Activated CD8-positive, alpha-beta T cell treated with anti-CD3 and anti-CD28 coated beads for 36 hours (primary cell): ENCODE measurements at regions of chr7 and their contacts with region 1.

Region 1: DNA sequence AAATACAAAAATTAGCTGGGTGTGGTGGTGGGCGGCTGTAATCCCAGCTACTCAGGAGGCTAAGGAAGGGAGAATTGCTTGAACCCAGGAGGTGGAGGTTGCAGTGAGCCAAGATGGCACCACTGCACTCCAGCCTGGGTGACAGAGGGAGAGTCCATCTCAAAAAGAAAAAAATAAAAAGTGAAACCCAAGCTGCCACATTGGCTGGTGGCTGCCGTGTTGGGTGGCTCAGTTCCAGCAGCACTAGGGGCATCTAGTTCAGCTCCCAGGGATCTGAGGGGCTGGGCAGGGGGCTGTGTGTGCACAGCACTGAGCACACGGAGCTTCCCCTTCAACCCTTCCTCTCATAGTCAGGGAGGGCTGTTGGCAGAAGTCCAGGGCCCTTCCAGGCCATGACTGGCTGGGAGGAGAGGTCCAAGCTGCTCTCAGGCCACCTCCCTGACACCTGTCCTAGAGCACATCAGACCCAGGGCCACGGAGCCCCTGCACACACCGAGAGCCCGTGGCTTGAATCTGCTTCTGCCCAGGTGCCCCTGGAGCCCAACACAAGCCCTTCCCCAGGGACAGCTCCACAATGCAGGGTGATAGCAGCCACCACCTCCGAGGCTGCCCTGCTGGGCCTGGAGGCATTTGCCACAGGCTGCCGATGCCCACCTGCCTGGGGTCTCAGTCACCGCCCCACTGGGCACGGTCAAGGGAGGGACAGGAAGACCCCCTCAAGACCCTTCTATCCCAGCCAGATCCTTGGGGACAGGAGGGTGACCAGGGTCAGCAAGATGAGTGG is 47.3 kb downstream of the YKT6 start:
- DNase-seq: no peak
- ATAC-seq: no peak
- H3K4me3 Mint-ChIP-seq: no peak overlapping the region
- H3K27ac Mint-ChIP-seq: no peak overlapping the region
- H3K4me1 Mint-ChIP-seq: no peaks in the 10 kb centered on the region
- H3K27me3 Mint-ChIP-seq: no peaks in the 10 kb centered on the region
- CTCF ChIP-seq: no peak

Region 2: GRCh38 chr7:44264221-44264931 is 16.3 kb after region 1 on chr7:
- CTCF ChIA-PET with region 1: no interaction called
- POLR2A ChIA-PET with region 1: no interaction called
- intact Hi-C with region 1: no loop called
- DNase-seq: peak; percentile 26
- ATAC-seq: no peak
- H3K4me3 Mint-ChIP-seq: no peak overlapping the region
- H3K27ac Mint-ChIP-seq: no peak overlapping the region
- H3K4me1 Mint-ChIP-seq: peaks cover 24% of the 10 kb centered on the region
- H3K27me3 Mint-ChIP-seq: no peaks in the 10 kb centered on the region
- CTCF ChIP-seq: no peak

Region 3: GRCh38 chr7:44307301-44307900 is 59.3 kb after region 1 on chr7:
- CTCF ChIA-PET with region 1: no interaction called
- POLR2A ChIA-PET with region 1: no interaction called
- intact Hi-C with region 1: loop called (anchors 5 kb)
- DNase-seq: peak; percentile 44
- ATAC-seq: peak; percentile 70
- H3K4me3 Mint-ChIP-seq: no peak overlapping the region
- H3K27ac Mint-ChIP-seq: no peak overlapping the region
- H3K4me1 Mint-ChIP-seq: peaks cover 2% of the 10 kb centered on the region
- H3K27me3 Mint-ChIP-seq: peaks cover 13% of the 10 kb centered on the region
- CTCF ChIP-seq: peak; percentile 45